PC-9 (cell line): ENCODE measurements at regions of chr2 and their contacts with region 1.

Region 1: GRCh38 chr2:30447149-30448045 is at the start of gene LCLAT1:
- DNase-seq: peak; percentile 56 to 74
- H3K4me3 ChIP-seq: peak within 1 kb of the TSS; percentile 89
- H3K27ac ChIP-seq: peak within 1 kb of the TSS; percentile 53
- H3K4me1 ChIP-seq: peaks cover 23% of the 10 kb centered on the region
- H3K27me3 ChIP-seq: no peaks in the 10 kb centered on the region
- CTCF ChIP-seq: no peak
- total RNA-seq, gene LCLAT1: 21.9 and 35.7 TPM in 2 replicates

Region 2: DNA sequence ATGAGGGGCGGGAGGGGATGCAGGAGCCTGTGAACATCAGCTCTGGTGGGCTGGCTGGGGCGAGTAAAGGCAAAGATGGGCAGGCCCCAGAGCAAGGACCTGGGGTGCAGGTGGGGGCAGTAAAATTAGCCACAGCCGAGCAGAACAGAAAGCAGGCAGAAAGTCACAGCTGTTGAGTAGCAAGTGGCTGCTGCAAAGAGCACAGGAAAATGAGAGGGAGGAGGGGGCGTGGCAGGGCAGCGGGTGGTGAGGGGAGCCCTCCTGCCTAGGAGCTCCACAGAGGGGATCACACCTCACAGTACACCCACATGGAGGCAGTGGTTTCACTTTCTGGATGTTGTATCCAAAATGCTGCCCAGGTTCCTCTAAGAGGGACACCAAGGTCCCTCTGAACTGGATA is 136.4 kb before region 1 on chr2:
- CTCF ChIA-PET with region 1: no interaction called
- POLR2A ChIA-PET with region 1: no interaction called
- intact Hi-C with region 1: no loop called
- DNase-seq: no peak
- H3K4me3 ChIP-seq: no peak overlapping the region
- H3K27ac ChIP-seq: no peak overlapping the region
- H3K4me1 ChIP-seq: no peaks in the 10 kb centered on the region
- H3K27me3 ChIP-seq: no peaks in the 10 kb centered on the region
- CTCF ChIP-seq: no peak

Region 3: GRCh38 chr2:30472326-30472725 is 24.9 kb after region 1 on chr2:
- CTCF ChIA-PET with region 1: interaction called, 13 read pairs
- POLR2A ChIA-PET with region 1: no interaction called
- intact Hi-C with region 1: no loop called
- DNase-seq: no peak
- H3K4me3 ChIP-seq: no peak overlapping the region
- H3K27ac ChIP-seq: peak overlapping the region; percentile 25; the same call in 1 of the 2 replicates
- H3K4me1 ChIP-seq: no peaks in the 10 kb centered on the region
- H3K27me3 ChIP-seq: no peaks in the 10 kb centered on the region
- CTCF ChIP-seq: no peak